ENCODE measurements at regions of chr22 and their contacts with region 1.

Region 1: GRCh38 chr22:50250555-50251476 is at the start of gene HDAC10:
- DNase-seq: peak; percentile 96
- CTCF ChIP-seq: no peak

Region 2: DNA sequence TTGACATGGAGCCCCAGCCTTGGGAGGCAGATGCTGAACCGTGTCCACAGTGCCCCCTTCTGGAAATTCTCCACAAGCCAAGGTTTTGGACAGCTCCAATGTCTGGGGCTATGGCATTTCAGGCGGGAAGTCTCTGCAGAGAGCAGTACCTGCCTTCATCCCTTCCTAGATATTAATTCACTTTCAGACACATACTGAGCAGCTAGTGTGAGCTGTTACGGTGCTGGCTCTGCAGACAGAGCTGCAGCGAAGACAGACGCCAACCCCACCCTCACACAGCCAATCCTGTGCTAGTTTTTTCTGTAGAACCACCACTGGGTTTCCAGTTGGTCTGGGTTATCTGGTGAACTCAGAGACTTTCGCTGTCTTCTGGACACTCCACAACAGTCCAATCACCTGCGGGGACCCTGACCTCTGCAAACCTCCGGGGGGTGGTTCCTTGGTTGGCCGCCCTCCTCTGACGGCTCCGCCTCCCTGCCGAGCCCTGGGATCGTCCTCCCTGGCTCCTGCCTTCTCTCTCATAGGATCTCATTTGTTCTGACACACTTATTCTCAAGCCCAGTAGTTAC is 247.6 kb after region 1 on chr22:
- in situ Hi-C with region 1: loop called (anchors 10 kb)
- DNase-seq: peak; percentile 77
- CTCF ChIP-seq: peak; percentile 79